ENCODE measurements at regions of chr3 and their contacts with region 1.

Region 1: DNA sequence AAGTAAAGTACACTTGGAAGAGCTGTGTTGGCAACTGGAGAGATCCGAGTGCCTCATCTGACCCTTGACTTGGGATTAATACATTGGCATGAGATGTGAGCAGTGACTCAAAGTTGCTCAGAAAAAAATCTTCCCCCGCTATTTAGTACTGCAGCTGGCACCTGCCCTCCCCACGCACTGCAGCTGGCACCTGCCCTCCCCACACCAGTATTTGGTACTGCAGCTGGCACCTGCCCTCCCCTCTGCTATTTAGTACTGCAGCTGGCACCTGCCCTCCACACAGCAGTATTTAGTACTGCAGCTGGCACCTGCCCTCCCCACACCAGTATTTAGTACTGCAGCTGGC is 3.9 kb upstream of the MUC20 start:
- DNase-seq: peak in 3 of 10 donors; percentile 36 to 66 (median 51)

Region 2: GRCh38 chr3:195616712-195617086 is 100.1 kb before region 1 on chr3:
- intact Hi-C with region 1: loop called (anchors 5 kb)
- DNase-seq: no peak

Measured in posterior cingulate gyrus (tissue), 11 donors.